CD8-positive, alpha-beta T cell (primary cell): ENCODE measurements at regions of chr2 and their contacts with region 1.

Region 1: DNA sequence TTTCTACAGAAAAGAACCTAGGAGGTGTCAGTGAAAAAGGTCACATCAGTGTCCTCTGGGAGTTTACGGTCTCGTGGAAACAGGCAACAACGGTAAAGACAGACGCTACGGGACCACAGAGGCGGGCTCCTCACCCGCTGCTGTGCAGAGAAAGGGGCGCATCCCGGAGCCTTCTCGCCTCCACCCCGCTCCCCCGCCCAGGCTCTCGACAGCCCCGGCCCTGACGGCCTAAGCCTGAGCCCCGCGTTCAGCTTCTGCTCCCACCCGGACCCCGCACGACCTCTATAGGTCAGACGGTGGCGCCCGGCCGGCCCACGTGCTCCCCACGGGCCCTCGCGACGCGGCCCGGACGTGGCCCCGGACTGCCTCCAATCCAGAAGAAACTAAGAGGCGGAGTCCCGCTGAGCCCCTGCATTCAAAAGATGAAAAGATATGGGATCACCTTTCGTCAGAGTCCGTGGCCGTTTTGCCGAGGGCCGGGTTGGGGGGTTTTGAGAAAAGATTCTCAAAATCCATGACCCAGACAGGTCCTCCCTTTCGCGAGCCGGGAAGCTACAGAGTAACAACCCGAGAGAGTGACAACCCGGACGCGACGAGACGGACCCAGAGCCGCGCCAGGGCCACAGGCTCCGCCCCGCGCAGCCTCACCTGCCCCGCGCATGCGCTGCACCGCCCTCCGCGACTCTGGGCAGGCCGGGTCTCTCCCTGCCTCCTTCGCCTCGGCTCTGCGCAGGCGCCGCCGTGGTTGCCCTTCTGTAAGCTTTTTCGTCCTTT is at the start of gene ZC3H8:
- DNase-seq: peak; percentile 90 to 98 (median 96)
- ATAC-seq: peak; percentile 91
- H3K4me3 ChIP-seq: peak within 1 kb of the TSS; percentile 61 to 74
- H3K4me3 Mint-ChIP-seq: peak within 1 kb of the TSS; percentile 88
- H3K27ac ChIP-seq: peak within 1 kb of the TSS; percentile 87 to 95
- H3K27ac Mint-ChIP-seq: peak within 1 kb of the TSS; percentile 93
- H3K4me1 ChIP-seq: peaks cover 26% of the 10 kb centered on the region
- H3K4me1 Mint-ChIP-seq: peaks cover 19% of the 10 kb centered on the region
- H3K27me3 ChIP-seq: no peaks in the 10 kb centered on the region
- H3K27me3 Mint-ChIP-seq: no peaks in the 10 kb centered on the region
- CTCF ChIP-seq: no peak
- total RNA-seq, gene ZC3H8: 11.1 to 11.7 TPM

Region 2: GRCh38 chr2:112121682-112122254 is 132.9 kb before region 1 on chr2:
- CTCF ChIA-PET with region 1: interaction called, 28 read pairs
- POLR2A ChIA-PET with region 1: no interaction called
- intact Hi-C with region 1: loop called (anchors 1 kb)
- DNase-seq: peak in 7 of 9 experiments; percentile 21 to 70 (median 53)
- ATAC-seq: peak; percentile 42
- H3K4me3 ChIP-seq: no peak overlapping the region
- H3K4me3 Mint-ChIP-seq: no peak overlapping the region
- H3K27ac ChIP-seq: no peak overlapping the region
- H3K27ac Mint-ChIP-seq: no peak overlapping the region
- H3K4me1 ChIP-seq: no peaks in the 10 kb centered on the region
- H3K4me1 Mint-ChIP-seq: no peaks in the 10 kb centered on the region
- H3K27me3 ChIP-seq: no peaks in the 10 kb centered on the region
- H3K27me3 Mint-ChIP-seq: no peaks in the 10 kb centered on the region
- CTCF ChIP-seq: peak; percentile 85

Region 3: GRCh38 chr2:112229348-112229747 is 25.3 kb before region 1 on chr2:
- CTCF ChIA-PET with region 1: no interaction called
- POLR2A ChIA-PET with region 1: no interaction called
- intact Hi-C with region 1: loop called in 1 of 2 experiments (anchors 2 kb)
- DNase-seq: no peak
- ATAC-seq: no peak
- H3K4me3 ChIP-seq: no peak overlapping the region
- H3K4me3 Mint-ChIP-seq: no peak overlapping the region
- H3K27ac ChIP-seq: no peak overlapping the region
- H3K27ac Mint-ChIP-seq: peak overlapping the region; percentile 52
- H3K4me1 ChIP-seq: no peaks in the 10 kb centered on the region
- H3K4me1 Mint-ChIP-seq: peaks cover 2% of the 10 kb centered on the region
- H3K27me3 ChIP-seq: no peaks in the 10 kb centered on the region
- H3K27me3 Mint-ChIP-seq: no peaks in the 10 kb centered on the region
- CTCF ChIP-seq: no peak

Region 4: DNA sequence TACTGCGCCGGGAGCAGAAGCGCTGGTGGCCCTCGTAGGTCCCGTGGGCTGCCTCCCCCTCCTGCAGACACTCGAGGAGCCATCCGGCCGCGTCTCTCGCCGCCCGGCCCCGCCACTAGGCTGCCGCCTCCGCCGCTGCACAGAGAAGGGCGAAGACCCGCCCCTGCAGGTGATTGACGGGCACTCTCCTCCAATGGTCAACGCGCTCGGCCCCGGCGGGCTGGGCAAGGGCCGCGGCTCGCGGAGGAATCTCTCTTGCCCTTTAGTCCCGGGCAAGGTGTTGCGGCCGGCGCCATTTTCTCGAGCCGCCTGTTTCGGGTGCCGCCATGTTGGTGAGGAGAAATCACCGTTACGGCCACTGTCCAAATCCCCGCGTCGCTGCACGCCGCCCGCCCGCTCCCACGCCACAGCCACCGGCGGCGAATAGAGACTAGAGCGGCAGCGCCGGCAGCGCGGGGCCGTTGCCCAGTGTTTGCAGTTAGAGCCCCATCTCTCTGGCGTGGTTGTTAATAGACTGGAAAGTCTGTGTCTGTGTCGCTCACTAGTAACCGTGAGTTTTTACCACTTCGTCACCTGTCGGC is 20.7 kb after region 1 on chr2 and contains the start of gene ZC3H6:
- CTCF ChIA-PET with region 1: interaction called, 14 read pairs
- POLR2A ChIA-PET with region 1: interaction called, 17 read pairs
- intact Hi-C with region 1: loop called (anchors 1 kb)
- DNase-seq: peak; percentile 98 to 100 (median 100)
- ATAC-seq: peak; percentile 90
- H3K4me3 ChIP-seq: peak within 1 kb of the TSS; percentile 74 to 100
- H3K4me3 Mint-ChIP-seq: peak within 1 kb of the TSS; percentile 95
- H3K27ac ChIP-seq: peak within 1 kb of the TSS; percentile 96 to 100
- H3K27ac Mint-ChIP-seq: peak within 1 kb of the TSS; percentile 100
- H3K4me1 ChIP-seq: peaks cover 19% of the 10 kb centered on the region
- H3K4me1 Mint-ChIP-seq: peaks cover 26% of the 10 kb centered on the region
- H3K27me3 ChIP-seq: no peaks in the 10 kb centered on the region
- H3K27me3 Mint-ChIP-seq: no peaks in the 10 kb centered on the region
- CTCF ChIP-seq: peak; percentile 16
- total RNA-seq, gene ZC3H6: 13.7 to 15.1 TPM

Region 5: GRCh38 chr2:112542123-112542983 is 287.7 kb after region 1 on chr2 and contains the start of gene POLR1B:
- CTCF ChIA-PET with region 1: no interaction called
- POLR2A ChIA-PET with region 1: no interaction called
- intact Hi-C with region 1: loop called in 1 of 2 experiments (anchors 2 kb)
- DNase-seq: peak in 8 of 9 experiments; percentile 56 to 86 (median 75)
- ATAC-seq: peak; percentile 78
- H3K4me3 ChIP-seq: peak within 1 kb of the TSS; percentile 90
- H3K4me3 Mint-ChIP-seq: no peak within 1 kb of the TSS
- H3K27ac ChIP-seq: peak within 1 kb of the TSS; percentile 90 to 96
- H3K27ac Mint-ChIP-seq: no peak within 1 kb of the TSS
- H3K4me1 ChIP-seq: peaks cover 17% of the 10 kb centered on the region
- H3K4me1 Mint-ChIP-seq: peaks cover 26% of the 10 kb centered on the region
- H3K27me3 ChIP-seq: no peaks in the 10 kb centered on the region
- H3K27me3 Mint-ChIP-seq: no peaks in the 10 kb centered on the region
- CTCF ChIP-seq: no peak
- total RNA-seq, gene POLR1B: 10.0 to 11.0 TPM

Region 6: DNA sequence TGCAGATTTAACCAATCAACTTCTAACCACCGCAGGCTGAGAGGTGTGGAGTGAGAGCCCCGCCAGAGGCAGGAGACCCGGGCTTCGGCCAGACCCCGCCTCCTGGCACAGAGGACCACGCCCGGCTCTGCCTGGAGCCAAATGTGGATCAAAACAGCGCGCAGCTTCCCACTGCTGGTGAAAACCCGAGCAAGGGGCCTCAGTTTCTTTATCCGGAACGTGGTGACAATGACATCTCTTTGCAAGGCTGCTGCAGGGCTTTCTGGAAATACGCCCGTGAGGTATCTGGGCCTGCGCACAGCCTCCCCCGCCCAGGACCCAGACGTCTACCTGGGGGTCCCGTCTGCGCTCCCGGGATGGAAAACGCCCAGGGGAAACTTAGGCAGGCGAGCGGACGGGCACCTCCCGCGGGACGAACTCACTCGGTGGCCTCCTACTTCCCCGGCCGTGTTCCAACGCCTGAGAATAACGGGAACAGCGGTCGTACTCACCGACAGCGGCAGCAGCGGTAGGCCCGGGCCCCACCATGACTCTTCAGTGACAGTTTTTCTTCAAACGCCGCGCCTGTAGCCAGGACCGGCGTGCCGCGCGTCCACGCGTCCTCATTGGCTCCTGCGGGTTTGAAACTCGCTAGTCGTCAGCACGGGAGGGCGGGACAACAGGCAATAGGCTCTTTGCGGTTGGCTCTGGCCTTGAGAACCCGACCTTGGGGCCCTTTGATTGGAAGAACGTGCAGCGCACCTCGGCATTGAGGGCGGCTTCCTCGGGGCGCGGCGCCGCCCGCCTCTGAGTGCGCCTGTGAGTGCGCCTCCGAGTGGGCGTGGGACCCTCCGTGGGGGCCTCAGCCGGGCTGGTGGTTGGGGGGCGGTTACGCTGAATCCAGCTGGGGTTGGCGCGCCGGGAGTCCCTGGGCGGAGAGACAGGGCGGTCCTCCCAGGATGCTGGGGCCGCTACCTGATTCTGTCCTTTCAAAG is 509.7 kb after region 1 on chr2 and contains the start of gene CKAP2L:
- CTCF ChIA-PET with region 1: no interaction called
- POLR2A ChIA-PET with region 1: no interaction called
- intact Hi-C with region 1: loop called in 1 of 2 experiments (anchors 10 kb)
- DNase-seq: peak; percentile 85 to 98 (median 94)
- ATAC-seq: peak; percentile 98
- H3K4me3 ChIP-seq: peak within 1 kb of the TSS; percentile 72 to 74
- H3K4me3 Mint-ChIP-seq: peak within 1 kb of the TSS; percentile 92
- H3K27ac ChIP-seq: peak within 1 kb of the TSS; percentile 5 to 54
- H3K27ac Mint-ChIP-seq: peak within 1 kb of the TSS; percentile 70
- H3K4me1 ChIP-seq: peaks cover 12% of the 10 kb centered on the region
- H3K4me1 Mint-ChIP-seq: peaks cover 27% of the 10 kb centered on the region
- H3K27me3 ChIP-seq: no peaks in the 10 kb centered on the region
- H3K27me3 Mint-ChIP-seq: no peaks in the 10 kb centered on the region
- CTCF ChIP-seq: no peak
- total RNA-seq, gene CKAP2L: 0.50 to 0.57 TPM